Thyroid gland (tissue), 4 donors: ENCODE measurements at regions of chr5 and their contacts with region 1.

Region 1: GRCh38 chr5:36866174-36866573 is 10.4 kb upstream of the NIPBL start:
- DNase-seq: no peak
- H3K4me3 ChIP-seq: no peak overlapping the region
- H3K27ac ChIP-seq: no peak overlapping the region
- H3K4me1 ChIP-seq: no peaks in the 10 kb centered on the region
- H3K27me3 ChIP-seq: no peaks in the 10 kb centered on the region
- CTCF ChIP-seq: no peak
- POLR2A ChIP-seq: no peak

Region 2: DNA sequence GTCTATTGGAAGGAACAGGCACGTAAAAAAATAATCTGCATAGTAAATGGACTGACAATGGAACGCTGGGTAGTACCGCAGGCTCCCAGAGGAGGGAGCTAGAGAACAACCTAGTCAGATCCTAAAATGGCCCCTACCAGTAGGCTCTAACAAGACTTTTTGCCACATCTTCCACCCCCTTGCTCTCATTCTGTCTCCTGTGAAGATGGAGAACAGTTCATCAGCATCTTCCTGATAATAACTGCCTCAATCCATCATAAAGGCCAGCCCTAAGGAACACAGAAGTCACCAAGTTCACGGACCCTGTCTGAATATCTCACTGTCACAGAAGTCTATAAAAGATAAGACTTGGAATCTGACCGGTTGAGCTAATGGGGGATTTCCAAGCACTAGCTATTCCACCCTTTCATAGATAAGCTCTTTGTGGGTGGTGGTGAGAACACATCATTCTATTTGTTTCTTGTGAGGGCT is 126.4 kb before region 1 on chr5:
- intact Hi-C with region 1: loop called (anchors 5 kb)
- DNase-seq: peak; percentile 85 to 88
- H3K4me3 ChIP-seq: no peak overlapping the region
- H3K27ac ChIP-seq: no peak overlapping the region
- H3K4me1 ChIP-seq: peaks cover 10 to 19% of the 10 kb centered on the region in 2 donors
- H3K27me3 ChIP-seq: no peaks in the 10 kb centered on the region
- CTCF ChIP-seq: peak; percentile 62 to 93 (median 90)
- POLR2A ChIP-seq: no peak

Region 3: GRCh38 chr5:36787365-36788093 is 78.6 kb before region 1 on chr5:
- intact Hi-C with region 1: loop called (anchors 10 kb)
- DNase-seq: no peak
- H3K4me3 ChIP-seq: no peak overlapping the region
- H3K27ac ChIP-seq: no peak overlapping the region
- H3K4me1 ChIP-seq: no peaks in the 10 kb centered on the region
- H3K27me3 ChIP-seq: no peaks in the 10 kb centered on the region
- CTCF ChIP-seq: no peak
- POLR2A ChIP-seq: no peak